CD8-positive, alpha-beta T cell (primary cell): ENCODE measurements at regions of chr16 and their contacts with region 1.

Region 1: DNA sequence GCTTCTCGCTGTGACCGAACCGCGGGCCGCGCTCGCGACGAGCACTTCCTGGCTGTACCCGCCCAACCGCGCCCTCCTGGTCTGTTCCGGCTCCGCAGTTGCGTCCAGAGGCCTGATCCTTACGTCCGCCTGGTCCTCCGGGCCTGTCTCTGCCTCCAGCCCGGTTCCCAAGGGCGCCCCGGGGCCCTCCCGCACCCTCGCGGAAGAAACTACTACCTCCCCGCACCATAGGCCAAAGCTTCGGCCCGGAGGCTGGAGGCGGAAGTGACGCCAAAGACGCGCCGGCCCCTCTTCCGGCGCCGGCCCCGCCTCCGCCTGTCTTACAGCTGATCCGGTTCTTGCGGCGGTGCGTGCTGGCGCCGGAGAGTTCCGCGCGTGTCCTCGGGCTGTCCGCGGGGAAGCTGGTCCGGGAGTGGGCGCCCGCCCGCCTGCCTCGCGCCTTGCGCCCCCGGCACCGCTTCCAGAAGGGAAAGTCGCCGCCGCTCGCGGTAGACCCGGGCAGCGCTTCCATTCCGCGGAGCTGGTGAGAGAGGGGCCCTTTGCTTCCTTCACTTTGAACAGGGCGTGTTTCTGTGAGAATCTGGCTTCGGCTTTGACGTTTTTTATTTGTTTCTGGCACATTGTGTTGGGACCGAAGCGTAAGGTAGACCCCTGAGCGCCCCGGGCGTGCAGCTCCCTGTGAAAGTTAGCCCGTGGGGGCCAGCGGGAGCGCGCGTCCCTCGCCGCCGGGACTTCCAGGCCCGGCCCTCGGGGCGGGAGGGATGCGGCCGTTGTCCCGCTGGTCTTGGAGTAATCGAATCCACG is at the start of gene ZNF778:
- DNase-seq: peak; percentile 56 to 92 (median 80)
- ATAC-seq: peak; percentile 69
- H3K4me3 ChIP-seq: peak within 1 kb of the TSS; percentile 87 to 90
- H3K4me3 Mint-ChIP-seq: peak within 1 kb of the TSS; percentile 93
- H3K27ac ChIP-seq: peak within 1 kb of the TSS; percentile 95 to 98
- H3K27ac Mint-ChIP-seq: peak within 1 kb of the TSS; percentile 83
- H3K4me1 ChIP-seq: peaks cover 16% of the 10 kb centered on the region
- H3K4me1 Mint-ChIP-seq: peaks cover 35% of the 10 kb centered on the region
- H3K27me3 ChIP-seq: no peaks in the 10 kb centered on the region
- H3K27me3 Mint-ChIP-seq: no peaks in the 10 kb centered on the region
- CTCF ChIP-seq: no peak
- total RNA-seq, gene ZNF778: 8.4 to 8.9 TPM

Region 2: GRCh38 chr16:88737298-88738150 is 480.1 kb before region 1 on chr16:
- CTCF ChIA-PET with region 1: interaction called, 11 read pairs
- POLR2A ChIA-PET with region 1: no interaction called
- intact Hi-C with region 1: loop called in 1 of 2 experiments (anchors 1 kb)
- DNase-seq: peak; percentile 34 to 88 (median 59)
- ATAC-seq: peak; percentile 97
- H3K4me3 ChIP-seq: no peak overlapping the region
- H3K4me3 Mint-ChIP-seq: no peak overlapping the region
- H3K27ac ChIP-seq: no peak overlapping the region
- H3K27ac Mint-ChIP-seq: no peak overlapping the region
- H3K4me1 ChIP-seq: peaks cover 6% of the 10 kb centered on the region
- H3K4me1 Mint-ChIP-seq: peaks cover 2% of the 10 kb centered on the region
- H3K27me3 ChIP-seq: no peaks in the 10 kb centered on the region
- H3K27me3 Mint-ChIP-seq: no peaks in the 10 kb centered on the region
- CTCF ChIP-seq: peak; percentile 95

Region 3: DNA sequence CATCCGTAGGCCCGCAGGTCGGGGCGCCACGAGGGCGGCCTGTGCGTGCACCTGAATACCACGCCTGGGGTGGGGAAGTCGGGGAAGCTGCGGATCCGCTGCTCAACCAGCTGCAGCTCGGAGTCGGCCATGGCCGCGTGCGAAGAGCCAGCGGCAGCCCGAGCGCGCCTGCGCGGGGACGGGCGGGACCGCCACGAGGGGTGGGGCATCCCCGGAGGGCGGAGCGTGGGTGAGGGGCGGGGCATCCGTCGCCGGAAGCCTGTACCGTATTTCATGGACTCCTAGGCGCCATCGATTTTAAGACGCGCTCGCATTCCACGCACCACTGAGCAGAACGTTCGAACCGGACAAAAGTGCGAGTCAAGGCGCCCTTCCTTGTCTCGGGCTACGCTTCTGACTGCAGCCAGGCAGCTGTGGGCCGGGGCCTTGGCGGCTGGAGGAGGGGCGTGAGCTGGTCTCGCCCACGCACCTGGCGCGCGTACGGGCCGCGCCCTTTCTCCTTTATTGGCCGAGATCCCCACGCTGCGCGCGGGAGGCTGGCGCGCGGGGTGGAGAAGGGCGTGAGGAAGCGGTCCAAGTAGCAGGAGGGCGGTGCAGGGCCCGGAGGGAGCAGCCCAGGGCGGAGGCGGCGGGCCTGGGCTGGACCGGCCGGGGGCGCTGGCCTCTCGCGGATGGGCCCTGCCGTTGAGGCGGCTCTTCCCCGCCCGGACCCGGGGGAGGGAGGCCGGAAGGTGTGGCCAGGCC is 405.6 kb before region 1 on chr16 and contains the start of gene APRT:
- CTCF ChIA-PET with region 1: interaction called, 5 read pairs
- POLR2A ChIA-PET with region 1: interaction called, 6 read pairs
- intact Hi-C with region 1: loop called (anchors 1 kb)
- DNase-seq: peak; percentile 93 to 99 (median 97)
- ATAC-seq: peak; percentile 90
- H3K4me3 ChIP-seq: peak within 1 kb of the TSS; percentile 75 to 99
- H3K4me3 Mint-ChIP-seq: peak within 1 kb of the TSS; percentile 97
- H3K27ac ChIP-seq: peak within 1 kb of the TSS; percentile 71 to 87
- H3K27ac Mint-ChIP-seq: peak within 1 kb of the TSS; percentile 97
- H3K4me1 ChIP-seq: peaks cover 21% of the 10 kb centered on the region
- H3K4me1 Mint-ChIP-seq: peaks cover 19% of the 10 kb centered on the region
- H3K27me3 ChIP-seq: no peaks in the 10 kb centered on the region
- H3K27me3 Mint-ChIP-seq: no peaks in the 10 kb centered on the region
- CTCF ChIP-seq: no peak
- total RNA-seq, gene APRT: 171 to 178 TPM

Region 4: DNA sequence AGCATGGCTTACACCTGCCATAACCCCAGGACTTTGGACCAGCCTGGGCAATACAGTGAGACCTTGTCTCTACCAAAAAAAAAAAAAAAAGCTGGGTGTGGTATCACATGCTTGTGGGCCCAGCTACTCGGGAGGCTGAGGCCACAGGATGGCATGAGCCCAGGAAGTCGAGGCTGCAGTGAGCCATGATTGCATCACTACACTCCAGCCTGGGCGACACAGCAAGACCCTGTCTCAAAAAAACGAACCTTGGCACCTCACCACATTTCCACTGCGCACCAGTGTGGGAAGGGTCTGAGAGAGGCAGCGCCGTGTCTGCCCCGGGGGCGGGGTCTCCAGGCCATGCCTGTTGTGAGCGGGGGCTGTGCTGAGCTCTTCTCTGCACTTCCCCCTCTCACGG is 117.7 kb before region 1 on chr16:
- CTCF ChIA-PET with region 1: no interaction called
- POLR2A ChIA-PET with region 1: no interaction called
- intact Hi-C with region 1: loop called (anchors 2 kb)
- DNase-seq: peak in 3 of 9 experiments; percentile 17 to 61 (median 60)
- ATAC-seq: no peak
- H3K4me3 ChIP-seq: no peak overlapping the region
- H3K4me3 Mint-ChIP-seq: no peak overlapping the region
- H3K27ac ChIP-seq: no peak overlapping the region
- H3K27ac Mint-ChIP-seq: peak overlapping the region; percentile 71
- H3K4me1 ChIP-seq: peaks cover 66% of the 10 kb centered on the region
- H3K4me1 Mint-ChIP-seq: peaks cover 55% of the 10 kb centered on the region
- H3K27me3 ChIP-seq: no peaks in the 10 kb centered on the region
- H3K27me3 Mint-ChIP-seq: no peaks in the 10 kb centered on the region
- CTCF ChIP-seq: no peak

Region 5: GRCh38 chr16:89122322-89122851 is 95.2 kb before region 1 on chr16:
- CTCF ChIA-PET with region 1: no interaction called
- POLR2A ChIA-PET with region 1: no interaction called
- intact Hi-C with region 1: loop called in 1 of 2 experiments (anchors 2 kb)
- DNase-seq: peak; percentile 43 to 90 (median 76)
- ATAC-seq: peak; percentile 97
- H3K4me3 ChIP-seq: peak overlapping the region in 1 of 2 experiments; percentile 32
- H3K4me3 Mint-ChIP-seq: peak overlapping the region; percentile 53
- H3K27ac ChIP-seq: peak overlapping the region in 1 of 2 experiments; percentile 21
- H3K27ac Mint-ChIP-seq: peak overlapping the region; percentile 94
- H3K4me1 ChIP-seq: peaks cover 27% of the 10 kb centered on the region
- H3K4me1 Mint-ChIP-seq: peaks cover 33% of the 10 kb centered on the region
- H3K27me3 ChIP-seq: no peaks in the 10 kb centered on the region
- H3K27me3 Mint-ChIP-seq: no peaks in the 10 kb centered on the region
- CTCF ChIP-seq: no peak

Region 6: GRCh38 chr16:89193021-89193575 is 24.5 kb before region 1 on chr16:
- CTCF ChIA-PET with region 1: interaction called, 4 read pairs
- POLR2A ChIA-PET with region 1: no interaction called
- intact Hi-C with region 1: loop called in 1 of 2 experiments (anchors 2 kb)
- DNase-seq: peak in 3 of 9 experiments; percentile 62 to 76 (median 64)
- ATAC-seq: no peak
- H3K4me3 ChIP-seq: no peak overlapping the region
- H3K4me3 Mint-ChIP-seq: no peak overlapping the region
- H3K27ac ChIP-seq: no peak overlapping the region
- H3K27ac Mint-ChIP-seq: no peak overlapping the region
- H3K4me1 ChIP-seq: no peaks in the 10 kb centered on the region
- H3K4me1 Mint-ChIP-seq: peaks cover 4% of the 10 kb centered on the region
- H3K27me3 ChIP-seq: no peaks in the 10 kb centered on the region
- H3K27me3 Mint-ChIP-seq: no peaks in the 10 kb centered on the region
- CTCF ChIP-seq: no peak

Region 7: GRCh38 chr16:89507834-89508590 is 290.4 kb after region 1 on chr16 and contains the start of gene SPG7:
- CTCF ChIA-PET with region 1: no interaction called
- POLR2A ChIA-PET with region 1: no interaction called
- intact Hi-C with region 1: loop called (anchors 1 kb)
- DNase-seq: peak; percentile 85 to 96 (median 88)
- ATAC-seq: peak; percentile 73
- H3K4me3 ChIP-seq: peak within 1 kb of the TSS; percentile 61 to 91
- H3K4me3 Mint-ChIP-seq: peak within 1 kb of the TSS; percentile 96
- H3K27ac ChIP-seq: peak within 1 kb of the TSS; percentile 77 to 86
- H3K27ac Mint-ChIP-seq: peak within 1 kb of the TSS; percentile 96
- H3K4me1 ChIP-seq: peaks cover 37% of the 10 kb centered on the region
- H3K4me1 Mint-ChIP-seq: peaks cover 32% of the 10 kb centered on the region
- H3K27me3 ChIP-seq: no peaks in the 10 kb centered on the region
- H3K27me3 Mint-ChIP-seq: no peaks in the 10 kb centered on the region
- CTCF ChIP-seq: no peak
- total RNA-seq, gene SPG7: 159 to 180 TPM